ENCODE measurements at regions of chr3 and their contacts with region 1.

Region 1: GRCh38 chr3:163490119-163490518 is 1588.2 kb downstream of the SI start:
- DNase-seq: peak; percentile 55
- H3K4me3 Mint-ChIP-seq: no peak overlapping the region
- H3K27ac Mint-ChIP-seq: no peak overlapping the region
- H3K4me1 Mint-ChIP-seq: no peaks in the 10 kb centered on the region
- H3K27me3 Mint-ChIP-seq: no peaks in the 10 kb centered on the region

Region 2: GRCh38 chr3:161559177-161559998 is 1930.7 kb before region 1 on chr3:
- CTCF ChIA-PET with region 1: no interaction called
- intact Hi-C with region 1: loop called (anchors 1 kb)
- DNase-seq: peak; percentile 12
- H3K4me3 Mint-ChIP-seq: no peak overlapping the region
- H3K27ac Mint-ChIP-seq: no peak overlapping the region
- H3K4me1 Mint-ChIP-seq: no peaks in the 10 kb centered on the region
- H3K27me3 Mint-ChIP-seq: peaks cover 13% of the 10 kb centered on the region

Region 3: GRCh38 chr3:161851941-161852566 is 1638.1 kb before region 1 on chr3:
- CTCF ChIA-PET with region 1: no interaction called
- intact Hi-C with region 1: loop called (anchors 2 kb)
- DNase-seq: peak; percentile 49
- H3K4me3 Mint-ChIP-seq: no peak overlapping the region
- H3K27ac Mint-ChIP-seq: no peak overlapping the region
- H3K4me1 Mint-ChIP-seq: no peaks in the 10 kb centered on the region
- H3K27me3 Mint-ChIP-seq: peaks cover 3% of the 10 kb centered on the region

Region 4: GRCh38 chr3:165185707-165186327 is 1695.7 kb after region 1 on chr3:
- CTCF ChIA-PET with region 1: no interaction called
- intact Hi-C with region 1: loop called (anchors 10 kb)
- DNase-seq: peak; percentile 55
- H3K4me3 Mint-ChIP-seq: no peak overlapping the region
- H3K27ac Mint-ChIP-seq: no peak overlapping the region
- H3K4me1 Mint-ChIP-seq: no peaks in the 10 kb centered on the region
- H3K27me3 Mint-ChIP-seq: peaks cover 13% of the 10 kb centered on the region